Activated CD4-positive, alpha-beta T cell treated with anti-CD3 and anti-CD28 coated beads, Interleukin-2, amount 10 ng/mL, durations not matched to agents 7 days and 5 days (primary cell): ENCODE measurements at regions of chr19 and their contacts with region 1.

Region 1: GRCh38 chr19:45327404-45328143 is 4.9 kb upstream of the CKM start:
- DNase-seq: no peak
- H3K4me3 Mint-ChIP-seq: no peak overlapping the region
- H3K27ac Mint-ChIP-seq: no peak overlapping the region
- H3K4me1 Mint-ChIP-seq: peaks cover 4% of the 10 kb centered on the region
- H3K27me3 Mint-ChIP-seq: peaks cover 12% of the 10 kb centered on the region

Region 2: DNA sequence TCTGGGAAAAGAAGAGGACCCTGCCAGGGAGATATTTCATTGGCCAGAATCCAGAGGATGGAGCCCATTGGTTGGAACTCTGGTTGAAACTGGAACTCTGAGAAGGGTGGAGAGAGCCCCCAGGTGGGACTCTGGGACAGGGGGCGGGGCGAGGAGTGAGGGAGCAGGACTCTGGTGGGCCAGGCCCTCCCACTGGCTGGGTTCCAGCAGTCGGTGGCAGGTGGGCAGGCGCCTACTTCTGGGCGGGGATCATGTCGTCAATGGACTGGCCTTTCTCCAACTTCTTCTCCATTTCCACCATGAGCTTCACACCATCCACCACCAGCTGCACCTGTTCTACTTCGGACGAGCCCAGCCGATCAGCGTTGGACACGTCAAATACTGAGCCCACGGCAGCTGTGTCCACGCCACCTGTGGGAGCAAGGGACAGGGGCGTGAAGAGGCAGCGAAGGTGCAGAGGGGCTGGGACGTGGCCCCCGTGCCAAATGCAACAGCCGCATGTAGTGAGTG is 21.0 kb before region 1 on chr19:
- CTCF ChIA-PET with region 1: no interaction called
- POLR2A ChIA-PET with region 1: no interaction called
- DNase-seq: no peak
- H3K4me3 Mint-ChIP-seq: no peak overlapping the region
- H3K27ac Mint-ChIP-seq: no peak overlapping the region
- H3K4me1 Mint-ChIP-seq: no peaks in the 10 kb centered on the region
- H3K27me3 Mint-ChIP-seq: no peaks in the 10 kb centered on the region

Region 3: DNA sequence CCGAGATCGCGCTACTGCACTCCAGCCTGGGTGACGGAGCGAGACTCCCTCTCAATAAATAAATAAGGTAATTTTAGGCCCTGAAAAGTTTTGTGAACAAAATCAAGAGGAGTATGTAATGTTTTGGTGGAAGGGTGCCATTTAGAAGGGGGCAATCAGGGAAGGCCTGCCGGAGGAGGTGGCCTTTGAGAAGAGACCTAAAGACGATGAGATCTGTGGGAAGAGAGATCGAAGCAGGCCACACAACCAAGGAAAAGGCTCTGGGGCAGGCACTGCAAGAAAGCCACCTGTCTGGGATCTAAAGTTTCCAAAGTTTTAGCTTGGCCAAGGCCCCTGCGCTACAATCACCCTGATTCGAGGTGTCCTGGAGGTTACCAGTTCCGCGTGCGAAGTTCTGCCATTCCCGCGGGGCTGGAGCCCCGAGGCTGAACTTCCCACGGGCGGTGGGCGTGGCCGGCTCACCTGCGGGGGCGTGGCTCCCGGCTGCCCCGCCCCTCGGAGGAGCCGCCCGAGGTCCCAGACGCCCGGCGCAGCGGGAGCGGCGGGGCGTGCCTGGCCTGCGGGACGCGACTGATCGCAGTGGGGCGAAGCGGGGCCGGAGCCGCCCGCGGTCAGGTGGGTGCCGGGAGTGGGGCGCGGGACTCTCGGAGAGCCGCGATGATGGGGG is 12.8 kb after region 1 on chr19 and contains the start of gene KLC3:
- CTCF ChIA-PET with region 1: interaction called, 19 read pairs
- POLR2A ChIA-PET with region 1: no interaction called
- DNase-seq: peak; percentile 31
- H3K4me3 Mint-ChIP-seq: peak within 1 kb of the TSS; percentile 53
- H3K27ac Mint-ChIP-seq: no peak within 1 kb of the TSS
- H3K4me1 Mint-ChIP-seq: peaks cover 8% of the 10 kb centered on the region
- H3K27me3 Mint-ChIP-seq: peaks cover 13% of the 10 kb centered on the region
- total RNA-seq, gene KLC3: not detected

Region 4: DNA sequence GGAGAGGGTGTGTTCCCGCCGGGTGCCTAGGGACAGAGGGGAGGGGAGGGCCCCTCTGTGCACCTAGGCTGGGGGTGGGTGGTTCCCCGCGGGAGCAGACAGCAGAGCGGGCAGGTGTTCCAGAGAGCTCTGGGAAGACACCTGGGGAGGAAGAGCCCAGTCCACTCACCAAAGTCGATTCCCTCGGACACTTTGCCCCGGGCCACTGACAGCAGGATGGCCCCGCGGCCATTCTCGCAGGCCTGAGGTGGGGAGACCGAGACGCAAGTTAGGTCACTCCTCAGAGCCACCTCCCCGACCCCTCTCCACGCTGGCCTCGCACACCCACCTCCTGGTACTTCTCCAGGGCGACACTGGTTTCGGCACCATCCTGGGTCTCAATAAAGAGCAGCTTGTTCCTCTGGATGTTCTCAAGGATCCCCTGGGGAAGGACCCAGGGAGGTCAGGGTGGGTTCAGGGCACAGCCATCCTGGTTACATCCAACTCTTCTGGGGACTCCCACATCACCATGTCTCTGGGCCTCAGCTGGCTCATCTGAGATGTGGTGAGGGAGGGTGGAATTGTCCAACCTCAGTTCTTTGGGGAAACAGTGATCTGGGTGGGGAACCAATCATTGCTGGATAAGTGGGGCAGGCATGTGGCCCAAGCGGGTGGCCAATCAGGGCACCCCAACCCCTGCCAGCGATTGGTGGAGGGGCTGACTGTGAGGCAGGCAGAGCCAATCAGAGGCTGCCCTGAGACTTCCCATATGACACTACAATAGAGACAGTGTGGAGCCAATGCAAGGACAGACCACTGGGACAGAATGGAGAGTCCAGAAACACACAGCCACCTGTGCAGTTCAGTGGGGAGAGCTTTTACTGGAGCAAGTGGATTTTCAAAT is 25.6 kb after region 1 on chr19:
- CTCF ChIA-PET with region 1: no interaction called
- POLR2A ChIA-PET with region 1: no interaction called
- DNase-seq: no peak
- H3K4me3 Mint-ChIP-seq: no peak overlapping the region
- H3K27ac Mint-ChIP-seq: no peak overlapping the region
- H3K4me1 Mint-ChIP-seq: no peaks in the 10 kb centered on the region
- H3K27me3 Mint-ChIP-seq: no peaks in the 10 kb centered on the region